A673 (cell line): ENCODE measurements at regions of chr1 and their contacts with region 1.

Region 1: GRCh38 chr1:116853670-116854402 is 55.9 kb upstream of the PTGFRN start:
- DNase-seq: peak; percentile 24
- H3K4me3 ChIP-seq: no peak overlapping the region
- H3K27ac ChIP-seq: no peak overlapping the region
- H3K4me1 ChIP-seq: peaks cover 38% of the 10 kb centered on the region
- H3K27me3 ChIP-seq: no peaks in the 10 kb centered on the region
- CTCF ChIP-seq: no peak

Region 2: GRCh38 chr1:116386042-116386441 is 467.8 kb before region 1 on chr1:
- CTCF ChIA-PET with region 1: no interaction called
- POLR2A ChIA-PET with region 1: interaction called, 30 read pairs
- intact Hi-C with region 1: no loop called
- DNase-seq: no peak
- H3K4me3 ChIP-seq: no peak overlapping the region
- H3K27ac ChIP-seq: peak overlapping the region; percentile 22
- H3K4me1 ChIP-seq: peaks cover 85% of the 10 kb centered on the region
- H3K27me3 ChIP-seq: no peaks in the 10 kb centered on the region
- CTCF ChIP-seq: no peak

Region 3: DNA sequence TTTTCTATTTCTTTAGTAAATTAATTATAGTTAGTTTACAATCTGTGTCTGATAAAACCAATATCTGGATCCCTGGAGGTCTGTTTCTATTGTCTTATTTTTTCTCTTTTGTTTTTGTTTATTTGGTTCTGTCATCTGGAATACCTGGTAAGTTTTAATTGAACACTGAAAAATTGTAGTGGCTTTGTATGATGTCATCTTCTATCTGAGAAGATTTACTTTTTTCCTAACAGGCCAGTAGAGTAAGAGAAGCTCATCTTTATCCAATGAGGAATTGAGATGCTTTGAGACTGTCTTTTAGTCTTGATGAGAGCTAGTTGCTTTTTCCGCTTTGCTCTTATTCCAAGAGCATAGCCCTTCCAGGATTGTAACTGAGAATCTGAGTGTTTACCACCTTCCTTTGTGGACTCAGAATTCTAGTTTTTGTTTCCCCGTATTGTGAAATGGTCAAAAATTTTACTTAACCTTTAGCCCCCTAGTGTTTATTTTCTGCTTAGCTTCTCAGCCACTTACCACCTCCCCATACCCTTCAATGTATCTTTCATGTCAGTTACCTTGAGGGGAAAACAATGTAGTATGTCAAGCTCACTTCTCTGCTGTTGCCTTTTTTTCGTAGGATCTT is 80.9 kb after region 1 on chr1:
- CTCF ChIA-PET with region 1: no interaction called
- POLR2A ChIA-PET with region 1: no interaction called
- intact Hi-C with region 1: no loop called
- DNase-seq: no peak
- H3K4me3 ChIP-seq: no peak overlapping the region
- H3K27ac ChIP-seq: no peak overlapping the region
- H3K4me1 ChIP-seq: no peaks in the 10 kb centered on the region
- H3K27me3 ChIP-seq: no peaks in the 10 kb centered on the region
- CTCF ChIP-seq: peak; percentile 41; the same call in 1 of the 2 replicates

Region 4: GRCh38 chr1:117054068-117054467 is 200.2 kb after region 1 on chr1:
- CTCF ChIA-PET with region 1: no interaction called
- POLR2A ChIA-PET with region 1: no interaction called
- intact Hi-C with region 1: loop called (anchors 2 kb)
- DNase-seq: no peak
- H3K4me3 ChIP-seq: no peak overlapping the region
- H3K27ac ChIP-seq: no peak overlapping the region
- H3K4me1 ChIP-seq: peaks cover 9% of the 10 kb centered on the region
- H3K27me3 ChIP-seq: no peaks in the 10 kb centered on the region
- CTCF ChIP-seq: no peak

Region 5: GRCh38 chr1:117210831-117211261 is 357.0 kb after region 1 on chr1 and contains the start of gene VTCN1:
- CTCF ChIA-PET with region 1: no interaction called
- POLR2A ChIA-PET with region 1: no interaction called
- intact Hi-C with region 1: no loop called
- DNase-seq: no peak
- H3K4me3 ChIP-seq: no peak within 1 kb of the TSS
- H3K27ac ChIP-seq: no peak within 1 kb of the TSS
- H3K4me1 ChIP-seq: no peaks in the 10 kb centered on the region
- H3K27me3 ChIP-seq: peaks cover 5% of the 10 kb centered on the region
- CTCF ChIP-seq: no peak
- total RNA-seq, gene VTCN1: not detected in 2 replicates